HEK293 (cell line): ENCODE measurements at regions of chr18 and their contacts with region 1.

Region 1: DNA sequence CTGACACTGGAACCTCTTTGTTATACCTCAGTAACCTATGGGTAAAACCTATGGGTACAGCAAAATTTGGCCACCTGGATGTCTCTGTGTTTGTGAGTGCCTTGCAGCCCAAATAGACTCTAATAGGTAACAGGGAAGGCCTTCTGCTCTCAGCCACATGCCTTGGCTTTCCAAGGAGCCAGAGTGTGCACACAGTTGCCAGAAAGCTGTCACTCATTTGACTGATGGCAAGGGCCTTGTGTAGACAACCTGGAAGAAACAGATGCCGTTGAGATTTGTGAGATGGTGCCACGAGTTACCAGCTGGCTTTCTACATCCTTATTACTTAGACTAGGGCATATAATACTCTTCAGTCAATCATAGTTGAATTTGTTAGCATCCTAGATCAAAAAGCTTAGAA is 90.1 kb upstream of the RAB12 start:
- H3K4me3 ChIP-seq: no peak overlapping the region
- H3K27ac ChIP-seq: no peak overlapping the region
- H3K4me1 ChIP-seq: no peaks in the 10 kb centered on the region
- CTCF ChIP-seq: no peak

Region 2: GRCh38 chr18:8507361-8507760 is 11.7 kb before region 1 on chr18:
- CTCF ChIA-PET with region 1: interaction called, 11 read pairs
- POLR2A ChIA-PET with region 1: no interaction called
- H3K4me3 ChIP-seq: no peak overlapping the region
- H3K27ac ChIP-seq: no peak overlapping the region
- H3K4me1 ChIP-seq: no peaks in the 10 kb centered on the region
- CTCF ChIP-seq: no peak